Endothelial cell of umbilical vein (primary cell): ENCODE measurements at regions of chr1 and their contacts with region 1.

Region 1: GRCh38 chr1:32335790-32336590 is at the start of gene MARCKSL1:
- DNase-seq: peak; percentile 75
- H3K4me3 ChIP-seq: peak within 1 kb of the TSS; percentile 28 to 87 (median 80)
- H3K27ac ChIP-seq: peak within 1 kb of the TSS; percentile 49
- H3K4me1 ChIP-seq: peaks cover 14% of the 10 kb centered on the region
- H3K27me3 ChIP-seq: no peaks in the 10 kb centered on the region
- CTCF ChIP-seq: no peak
- POLR2A ChIP-seq: peak; percentile 98
- total RNA-seq, gene MARCKSL1: 249 and 265 TPM in 2 replicates

Region 2: DNA sequence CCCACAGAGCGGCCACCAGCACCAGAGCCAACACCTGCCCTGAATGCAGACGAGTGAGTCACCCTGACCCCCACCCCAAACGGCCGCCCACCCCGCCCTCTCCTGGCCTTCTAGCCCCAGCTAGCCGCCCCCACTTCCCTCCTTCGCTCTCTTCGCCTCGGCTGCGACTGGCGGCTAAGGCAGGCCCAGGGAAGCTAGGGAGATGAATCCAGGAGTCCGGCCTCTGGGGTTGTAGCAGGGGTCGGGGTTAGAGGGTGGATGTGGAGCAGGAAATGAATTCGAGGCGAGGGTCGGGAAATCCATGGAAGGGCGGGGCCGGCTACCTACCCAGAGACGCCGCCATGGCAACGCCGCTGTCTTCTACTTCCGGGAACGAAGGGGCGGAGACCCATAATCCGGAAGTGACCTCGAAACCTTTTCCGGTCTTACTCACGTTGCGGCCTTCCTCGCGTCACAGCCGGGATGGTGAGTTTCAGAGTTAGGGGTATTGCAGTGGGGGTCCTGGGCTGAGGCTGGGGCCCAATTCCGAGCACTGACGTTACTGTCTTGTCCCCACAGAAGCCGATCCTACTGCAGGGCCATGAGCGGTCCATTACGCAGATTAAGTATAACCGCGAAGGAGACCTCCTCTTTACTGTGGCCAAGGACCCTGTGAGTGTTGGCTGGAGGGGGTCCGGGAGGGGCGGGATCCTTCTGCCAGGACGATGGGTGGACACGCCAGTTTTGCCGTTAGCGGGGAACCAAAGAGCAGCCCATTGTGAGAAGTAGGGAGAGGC is 113.8 kb before region 1 on chr1 and contains the starts of genes EIF3I and TMEM234:
- CTCF ChIA-PET with region 1: interaction called, 4 read pairs
- POLR2A ChIA-PET with region 1: interaction called, 8 read pairs
- dilution Hi-C with region 1: no loop called
- intact Hi-C with region 1: loop called (anchors 5 kb)
- DNase-seq: peak; percentile 90
- H3K4me3 ChIP-seq: peak within 1 kb of the TSS; percentile 79 to 81 (median 80)
- H3K27ac ChIP-seq: peak within 1 kb of the TSS; percentile 98
- H3K4me1 ChIP-seq: peaks cover 26% of the 10 kb centered on the region
- H3K27me3 ChIP-seq: no peaks in the 10 kb centered on the region
- CTCF ChIP-seq: no peak
- POLR2A ChIP-seq: peak; percentile 87
- total RNA-seq, gene EIF3I: 186 and 203 TPM in 2 replicates
- total RNA-seq, gene TMEM234: 15.7 and 20.7 TPM in 2 replicates

Region 3: GRCh38 chr1:32247983-32248889 is 87.8 kb before region 1 on chr1:
- CTCF ChIA-PET with region 1: interaction called, 12 read pairs
- POLR2A ChIA-PET with region 1: interaction called, 16 read pairs
- dilution Hi-C with region 1: no loop called
- intact Hi-C with region 1: loop called (anchors 2 kb)
- DNase-seq: peak; percentile 74
- H3K4me3 ChIP-seq: peak overlapping the region in 1 of 3 experiments; percentile 29
- H3K27ac ChIP-seq: peak overlapping the region; percentile 60
- H3K4me1 ChIP-seq: peaks cover 47% of the 10 kb centered on the region
- H3K27me3 ChIP-seq: no peaks in the 10 kb centered on the region
- CTCF ChIP-seq: peak; percentile 96 to 98
- POLR2A ChIP-seq: no peak

Region 4: DNA sequence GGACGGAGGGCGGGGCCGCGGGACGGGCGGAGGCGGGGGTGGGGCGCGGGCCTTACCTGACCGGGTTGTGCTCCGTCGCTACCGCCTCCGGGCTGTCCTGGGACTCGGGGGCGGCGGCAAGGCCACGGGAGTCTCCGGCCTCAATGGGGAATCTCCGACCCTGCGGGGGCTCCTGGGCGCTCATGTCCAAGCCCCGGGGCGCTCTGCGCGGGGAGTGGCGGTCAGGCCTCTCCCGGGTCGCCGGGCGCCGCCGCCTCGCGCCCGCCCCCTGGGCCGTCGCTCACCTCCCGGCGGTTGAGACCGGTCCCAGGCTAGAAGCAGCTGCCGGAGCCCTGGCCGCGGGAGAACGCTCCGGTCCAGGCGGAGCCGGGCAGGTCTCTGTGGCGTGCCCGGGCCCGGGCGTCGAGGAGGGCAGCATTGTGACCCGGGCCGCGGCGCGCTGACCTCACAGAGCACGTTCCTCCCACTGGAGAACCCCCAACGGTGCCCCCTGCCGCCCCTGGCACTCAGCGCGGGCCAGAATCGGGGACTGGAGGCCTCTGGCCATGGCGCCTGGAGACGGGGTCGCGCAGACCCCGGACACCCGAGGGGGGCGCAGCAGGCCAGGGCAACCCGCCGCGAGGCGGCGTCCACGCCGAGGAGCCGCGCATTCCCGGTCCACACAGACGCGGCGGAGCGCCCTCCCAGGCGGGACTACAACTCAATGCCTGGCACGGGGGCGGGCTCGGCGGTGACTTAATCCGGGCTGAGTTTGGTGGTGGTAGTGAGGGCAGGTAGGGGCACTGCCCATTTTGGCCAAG is 25.9 kb after region 1 on chr1:
- CTCF ChIA-PET with region 1: interaction called, 7 read pairs
- POLR2A ChIA-PET with region 1: interaction called, 8 read pairs
- dilution Hi-C with region 1: no loop called
- intact Hi-C with region 1: loop called (anchors 1 kb)
- DNase-seq: peak; percentile 41
- H3K4me3 ChIP-seq: peak overlapping the region in 2 of 3 experiments; percentile 14 to 31
- H3K27ac ChIP-seq: no peak overlapping the region
- H3K4me1 ChIP-seq: peaks cover 7% of the 10 kb centered on the region
- H3K27me3 ChIP-seq: no peaks in the 10 kb centered on the region
- CTCF ChIP-seq: peak; percentile 39 to 61
- POLR2A ChIP-seq: peak; percentile 60

Region 5: DNA sequence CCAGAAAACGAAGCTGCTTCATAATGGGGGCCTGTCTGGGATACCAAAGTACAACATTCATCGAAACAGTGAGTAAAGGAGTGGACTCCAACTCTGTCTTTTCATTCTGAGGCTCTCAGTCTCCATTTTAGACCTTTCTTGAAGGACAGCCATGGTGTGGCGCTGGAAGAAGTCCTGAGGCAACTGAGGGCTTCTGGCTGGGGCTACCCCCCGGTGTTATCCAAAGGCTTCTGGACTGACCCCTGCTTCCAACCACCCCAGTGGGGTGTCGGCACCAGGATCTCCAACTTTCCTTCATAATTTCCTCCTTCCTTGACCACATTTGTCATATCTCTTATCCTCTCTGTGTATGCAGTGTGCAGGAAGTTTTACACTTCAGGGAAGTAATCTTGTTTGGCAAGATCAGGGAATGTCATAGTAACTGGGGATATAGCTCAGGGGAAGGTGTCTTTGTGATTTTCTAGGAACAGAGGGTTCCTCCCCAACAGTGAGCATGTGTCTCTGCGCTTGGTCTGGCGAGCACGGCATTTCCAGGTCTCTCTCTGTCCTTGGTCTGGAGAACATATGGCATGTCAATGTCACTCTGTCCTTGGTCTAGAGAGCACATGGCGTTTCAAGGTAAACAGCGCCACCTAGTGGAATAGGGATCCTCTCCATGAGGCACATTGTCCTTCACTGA is 77.7 kb after region 1 on chr1:
- CTCF ChIA-PET with region 1: interaction called, 3 read pairs
- POLR2A ChIA-PET with region 1: no interaction called
- dilution Hi-C with region 1: no loop called
- intact Hi-C with region 1: loop called (anchors 1 kb)
- DNase-seq: peak; percentile 63
- H3K4me3 ChIP-seq: no peak overlapping the region
- H3K27ac ChIP-seq: no peak overlapping the region
- H3K4me1 ChIP-seq: no peaks in the 10 kb centered on the region
- H3K27me3 ChIP-seq: peaks cover 9 to 10% of the 10 kb centered on the region in 2 experiments
- CTCF ChIP-seq: peak; percentile 72 to 83
- POLR2A ChIP-seq: no peak